Head of caudate nucleus (tissue), 42 donors: ENCODE measurements at regions of chr9 and their contacts with region 1.

Region 1: DNA sequence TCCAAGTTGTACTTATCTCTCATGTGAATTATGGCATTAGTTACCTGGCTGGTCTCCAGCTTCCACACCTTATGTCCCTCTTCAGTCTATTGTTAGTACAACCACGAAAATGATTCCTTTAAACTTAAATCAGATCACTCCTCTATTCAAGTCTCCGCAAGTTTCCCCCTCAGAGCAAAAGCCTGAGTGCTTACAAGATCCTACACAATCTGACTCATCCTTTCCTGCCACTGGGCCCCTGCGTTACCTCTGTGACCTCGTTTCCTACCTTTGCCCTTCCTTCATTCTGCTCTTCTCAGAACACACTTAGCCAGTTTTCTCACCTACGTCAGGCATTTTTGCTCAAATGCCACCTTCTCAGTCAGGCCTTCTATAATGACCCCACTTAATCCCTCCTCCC is 45.1 kb upstream of the GLIS3 start:
- DNase-seq: no peak

Region 2: DNA sequence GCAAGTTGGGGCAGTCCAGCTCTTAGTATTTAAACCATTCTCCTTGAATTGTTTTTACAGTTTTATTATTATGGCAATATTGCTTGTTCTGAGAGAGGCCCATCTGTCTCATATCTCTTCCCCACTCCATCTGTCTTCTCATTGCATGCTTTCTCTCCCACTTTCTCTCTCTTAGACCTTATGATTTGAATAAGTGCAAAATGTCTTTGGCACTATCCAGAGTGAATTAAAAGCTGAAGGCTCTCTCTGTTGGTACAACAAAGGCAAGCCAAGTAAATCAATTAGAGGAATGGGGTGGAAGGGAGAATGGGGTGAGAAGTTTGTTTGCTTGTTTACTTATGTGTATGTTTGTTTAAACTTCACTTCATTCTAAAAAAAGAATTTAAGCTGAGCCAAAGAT is 623.9 kb before region 1 on chr9:
- intact Hi-C with region 1: loop called (anchors 10 kb)
- DNase-seq: no peak